H1 (cell line): ENCODE measurements at regions of chr7 and their contacts with region 1.

Region 1: GRCh38 chr7:142632291-142633134 is 116.8 kb upstream of the PRSS1 start:
- DNase-seq: peak; percentile 43 to 81
- H3K4me3 ChIP-seq: no peak overlapping the region
- H3K27ac ChIP-seq: no peak overlapping the region
- H3K4me1 ChIP-seq: no peaks in the 10 kb centered on the region
- H3K27me3 ChIP-seq: no peaks in the 10 kb centered on the region
- CTCF ChIP-seq: peak; percentile 59 to 90 (median 72)
- EP300 ChIP-seq: no peak
- POLR2A ChIP-seq: no peak
- RAD21 ChIP-seq: peak; percentile 87 to 92

Region 2: DNA sequence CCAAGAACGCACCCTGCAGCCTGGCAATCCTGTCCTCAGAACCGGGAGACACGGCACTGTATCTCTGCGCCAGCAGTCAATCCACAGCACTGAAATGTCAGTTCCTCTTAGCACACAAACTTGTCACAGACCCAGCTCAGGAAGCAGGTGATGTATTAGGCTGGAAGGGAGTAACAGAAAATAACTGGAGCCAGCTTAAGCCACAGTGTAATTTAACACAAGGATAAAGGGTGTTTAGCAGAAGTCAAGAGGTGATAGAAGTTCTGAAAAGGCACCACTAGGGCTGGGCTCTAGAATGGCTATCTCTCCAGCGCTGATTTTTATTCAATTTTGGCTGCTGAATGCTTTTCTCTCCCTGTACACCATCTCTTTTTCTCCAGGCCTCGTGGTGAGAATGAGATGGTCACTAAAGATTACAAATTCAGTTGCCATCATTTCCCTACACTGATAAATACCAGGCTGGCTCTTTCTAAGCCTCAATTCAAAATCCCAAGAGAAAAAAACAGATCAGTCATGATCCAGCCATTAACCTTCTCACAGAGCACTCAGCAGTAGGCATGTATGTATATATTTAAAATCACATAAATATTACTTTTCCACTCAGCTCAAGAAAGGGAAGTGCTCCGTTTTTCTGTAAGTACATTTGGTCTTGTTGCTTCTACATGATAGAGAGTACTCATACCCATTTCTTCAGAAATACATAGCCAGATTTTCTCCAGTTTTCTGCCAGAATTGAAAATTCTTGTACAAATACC is 14.1 kb after region 1 on chr7:
- CTCF ChIA-PET with region 1: interaction called, 30 read pairs
- POLR2A ChIA-PET with region 1: no interaction called
- DNase-seq: no peak
- H3K4me3 ChIP-seq: no peak overlapping the region
- H3K27ac ChIP-seq: no peak overlapping the region
- H3K4me1 ChIP-seq: no peaks in the 10 kb centered on the region
- H3K27me3 ChIP-seq: no peaks in the 10 kb centered on the region
- CTCF ChIP-seq: peak in 1 of 3 experiments; percentile 2; a peak in 1 of 4 replicates
- EP300 ChIP-seq: no peak
- POLR2A ChIP-seq: no peak
- RAD21 ChIP-seq: no peak

Region 3: DNA sequence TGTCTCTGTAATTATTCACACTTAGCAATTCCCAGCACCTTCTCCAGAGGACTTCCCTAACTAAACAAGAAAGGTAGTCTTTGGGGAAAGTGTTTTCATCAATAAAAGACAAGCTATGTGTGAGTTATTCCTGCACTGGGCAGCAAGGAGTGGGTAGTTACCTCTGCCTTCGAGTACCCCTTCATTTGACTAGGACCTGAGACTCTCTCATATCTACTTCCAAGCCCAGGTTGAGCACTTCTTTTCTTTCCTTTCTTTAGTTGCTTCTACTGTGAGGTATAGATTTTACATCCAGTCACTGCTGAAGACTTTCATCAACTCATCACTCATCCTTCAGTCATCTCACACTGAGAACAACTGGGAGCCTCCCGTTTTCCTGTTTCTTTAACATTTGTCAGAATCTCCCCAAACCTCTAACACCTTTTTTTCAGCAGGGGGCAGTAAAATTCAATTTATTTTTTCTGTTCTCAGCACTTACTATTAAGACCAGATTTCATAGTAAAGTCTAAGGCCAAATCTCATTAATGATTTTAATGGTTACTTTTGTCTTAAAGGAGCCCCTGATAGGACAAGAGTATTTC is 36.7 kb after region 1 on chr7:
- CTCF ChIA-PET with region 1: interaction called, 17 read pairs
- POLR2A ChIA-PET with region 1: no interaction called
- DNase-seq: no peak
- H3K4me3 ChIP-seq: no peak overlapping the region
- H3K27ac ChIP-seq: no peak overlapping the region
- H3K4me1 ChIP-seq: no peaks in the 10 kb centered on the region
- H3K27me3 ChIP-seq: no peaks in the 10 kb centered on the region
- CTCF ChIP-seq: peak in 2 of 3 experiments; percentile 38 to 48; a peak in 2 of 4 replicates
- EP300 ChIP-seq: no peak
- POLR2A ChIP-seq: no peak
- RAD21 ChIP-seq: peak; percentile 64 to 65